ENCODE measurements at regions of chr6 and their contacts with region 1.

Region 1: DNA sequence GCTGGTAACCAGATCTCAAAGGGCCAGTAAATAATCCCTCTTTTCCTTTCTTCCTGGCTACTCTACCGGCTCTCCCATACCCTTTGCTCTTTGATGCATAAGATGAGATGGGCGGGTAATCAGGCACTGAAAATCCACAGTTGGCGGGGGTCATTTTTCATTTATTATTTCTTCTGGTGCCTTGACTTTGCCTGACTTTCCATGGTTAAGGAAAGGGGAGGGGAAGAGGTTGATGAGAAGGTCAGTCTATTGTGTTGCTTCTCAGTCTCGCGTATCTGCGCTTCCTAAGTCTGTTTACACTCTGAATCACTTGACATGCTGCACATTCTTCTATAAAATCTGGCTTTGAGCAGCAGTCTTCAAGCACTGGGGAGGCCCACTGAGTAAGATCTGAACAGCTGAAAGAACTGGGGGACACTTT is 121.1 kb upstream of the HDGFL1 start:
- DNase-seq: peak; percentile 86
- ATAC-seq: peak; percentile 87
- H3K4me3 ChIP-seq: no peak overlapping the region
- H3K27ac ChIP-seq: peak overlapping the region; percentile 44
- H3K4me1 ChIP-seq: peaks cover 49% of the 10 kb centered on the region
- H3K27me3 ChIP-seq: no peaks in the 10 kb centered on the region
- CTCF ChIP-seq: no peak

Region 2: DNA sequence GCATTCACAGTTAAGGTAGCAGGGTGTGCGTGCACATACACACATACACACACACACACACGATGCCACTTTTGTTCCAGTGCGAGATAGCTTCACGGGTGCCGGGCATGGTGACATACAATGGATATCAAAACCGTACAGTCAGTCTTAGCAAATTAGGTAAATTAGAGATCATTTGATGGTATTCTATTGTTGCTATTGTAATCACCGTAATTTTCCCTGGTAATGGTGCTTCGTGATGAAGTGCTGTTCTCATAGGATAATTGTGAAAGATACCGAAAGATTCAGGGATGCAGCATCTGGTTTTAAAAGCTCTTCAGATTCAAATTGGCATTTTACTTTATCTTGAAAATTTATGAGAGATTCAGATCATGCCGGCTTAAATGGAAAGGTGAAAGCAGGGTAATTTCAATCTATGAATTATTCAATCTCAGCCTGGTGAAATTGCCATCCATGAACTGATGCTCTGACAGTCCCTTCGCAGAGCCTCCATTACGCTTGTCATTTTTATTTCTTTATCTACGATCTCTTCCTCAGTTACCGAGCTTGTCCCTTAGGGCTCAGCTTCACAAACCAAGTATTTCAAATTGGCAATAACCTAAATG is 926.1 kb before region 1 on chr6:
- CTCF ChIA-PET with region 1: no interaction called
- POLR2A ChIA-PET with region 1: no interaction called
- intact Hi-C with region 1: no loop called
- DNase-seq: no peak
- ATAC-seq: no peak
- H3K4me3 ChIP-seq: no peak overlapping the region
- H3K27ac ChIP-seq: no peak overlapping the region
- H3K4me1 ChIP-seq: no peaks in the 10 kb centered on the region
- H3K27me3 ChIP-seq: no peaks in the 10 kb centered on the region
- CTCF ChIP-seq: no peak

Region 3: GRCh38 chr6:21754891-21755290 is 693.4 kb before region 1 on chr6:
- CTCF ChIA-PET with region 1: no interaction called
- POLR2A ChIA-PET with region 1: no interaction called
- intact Hi-C with region 1: loop called (anchors 10 kb)
- DNase-seq: peak; percentile 89
- ATAC-seq: peak; percentile 68
- H3K4me3 ChIP-seq: no peak overlapping the region
- H3K27ac ChIP-seq: peak overlapping the region; percentile 40
- H3K4me1 ChIP-seq: peaks cover 44% of the 10 kb centered on the region
- H3K27me3 ChIP-seq: no peaks in the 10 kb centered on the region
- CTCF ChIP-seq: no peak

Region 4: GRCh38 chr6:22248513-22249308 is 199.6 kb before region 1 on chr6:
- CTCF ChIA-PET with region 1: no interaction called
- POLR2A ChIA-PET with region 1: interaction called, 7 read pairs
- intact Hi-C with region 1: loop called (anchors 1 kb)
- DNase-seq: peak; percentile 93
- ATAC-seq: peak; percentile 79
- H3K4me3 ChIP-seq: peak overlapping the region; percentile 30
- H3K27ac ChIP-seq: peak overlapping the region; percentile 95
- H3K4me1 ChIP-seq: peaks cover 45% of the 10 kb centered on the region
- H3K27me3 ChIP-seq: no peaks in the 10 kb centered on the region
- CTCF ChIP-seq: no peak

Region 5: GRCh38 chr6:22411376-22412105 is 36.8 kb before region 1 on chr6:
- CTCF ChIA-PET with region 1: no interaction called
- POLR2A ChIA-PET with region 1: no interaction called
- intact Hi-C with region 1: no loop called
- DNase-seq: no peak
- ATAC-seq: no peak
- H3K4me3 ChIP-seq: no peak overlapping the region
- H3K27ac ChIP-seq: no peak overlapping the region
- H3K4me1 ChIP-seq: no peaks in the 10 kb centered on the region
- H3K27me3 ChIP-seq: no peaks in the 10 kb centered on the region
- CTCF ChIP-seq: no peak

Region 6: DNA sequence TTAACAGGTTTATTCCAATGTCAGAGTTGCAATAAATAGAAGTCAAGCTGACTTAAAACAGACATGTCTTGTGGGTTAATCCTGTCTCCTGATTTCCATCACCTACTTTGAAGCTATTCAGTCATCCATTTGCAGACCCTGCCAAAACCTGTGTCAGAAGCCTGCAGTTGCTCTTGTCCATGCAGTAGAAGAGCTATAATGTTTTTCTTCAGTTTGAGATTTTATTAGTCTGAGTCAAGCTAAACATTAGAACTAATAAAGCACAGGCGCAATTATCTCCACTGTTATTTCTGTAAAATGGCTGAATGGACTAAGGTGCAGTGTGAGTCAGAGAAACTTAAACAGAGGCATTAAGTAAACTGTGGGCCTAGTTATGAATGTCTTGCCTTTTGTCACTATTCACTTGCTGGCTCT is 110.0 kb after region 1 on chr6:
- CTCF ChIA-PET with region 1: no interaction called
- POLR2A ChIA-PET with region 1: no interaction called
- intact Hi-C with region 1: loop called (anchors 1 kb)
- DNase-seq: peak; percentile 93
- ATAC-seq: peak; percentile 95
- H3K4me3 ChIP-seq: no peak overlapping the region
- H3K27ac ChIP-seq: peak overlapping the region; percentile 74
- H3K4me1 ChIP-seq: peaks cover 21% of the 10 kb centered on the region
- H3K27me3 ChIP-seq: no peaks in the 10 kb centered on the region
- CTCF ChIP-seq: no peak

Region 7: GRCh38 chr6:22727710-22728109 is 279.4 kb after region 1 on chr6:
- CTCF ChIA-PET with region 1: no interaction called
- POLR2A ChIA-PET with region 1: no interaction called
- intact Hi-C with region 1: loop called (anchors 10 kb)
- DNase-seq: no peak
- ATAC-seq: no peak
- H3K4me3 ChIP-seq: no peak overlapping the region
- H3K27ac ChIP-seq: no peak overlapping the region
- H3K4me1 ChIP-seq: no peaks in the 10 kb centered on the region
- H3K27me3 ChIP-seq: no peaks in the 10 kb centered on the region
- CTCF ChIP-seq: no peak

Region 8: GRCh38 chr6:22906091-22906555 is 457.8 kb after region 1 on chr6:
- CTCF ChIA-PET with region 1: no interaction called
- POLR2A ChIA-PET with region 1: no interaction called
- intact Hi-C with region 1: loop called (anchors 10 kb)
- DNase-seq: peak; percentile 79
- ATAC-seq: peak; percentile 73
- H3K4me3 ChIP-seq: no peak overlapping the region
- H3K27ac ChIP-seq: no peak overlapping the region
- H3K4me1 ChIP-seq: peaks cover 4% of the 10 kb centered on the region; the same call in 1 of the 2 replicates
- H3K27me3 ChIP-seq: no peaks in the 10 kb centered on the region
- CTCF ChIP-seq: peak; percentile 73

Measured in PC-3 (cell line).